OCI-LY7 (cell line): ENCODE measurements at regions of chr11 and their contacts with region 1.

Region 1: GRCh38 chr11:39385911-39386310 is 2073.5 kb downstream of the LRRC4C start:
- DNase-seq: no peak
- H3K4me3 ChIP-seq: no peak overlapping the region
- H3K27ac ChIP-seq: no peak overlapping the region
- H3K4me1 ChIP-seq: no peaks in the 10 kb centered on the region
- CTCF ChIP-seq: no peak

Region 2: GRCh38 chr11:38990161-38990560 is 395.8 kb before region 1 on chr11:
- CTCF ChIA-PET with region 1: no interaction called
- POLR2A ChIA-PET with region 1: no interaction called
- intact Hi-C with region 1: loop called (anchors 10 kb)
- DNase-seq: no peak
- H3K4me3 ChIP-seq: no peak overlapping the region
- H3K27ac ChIP-seq: no peak overlapping the region
- H3K4me1 ChIP-seq: no peaks in the 10 kb centered on the region
- CTCF ChIP-seq: no peak

Region 3: DNA sequence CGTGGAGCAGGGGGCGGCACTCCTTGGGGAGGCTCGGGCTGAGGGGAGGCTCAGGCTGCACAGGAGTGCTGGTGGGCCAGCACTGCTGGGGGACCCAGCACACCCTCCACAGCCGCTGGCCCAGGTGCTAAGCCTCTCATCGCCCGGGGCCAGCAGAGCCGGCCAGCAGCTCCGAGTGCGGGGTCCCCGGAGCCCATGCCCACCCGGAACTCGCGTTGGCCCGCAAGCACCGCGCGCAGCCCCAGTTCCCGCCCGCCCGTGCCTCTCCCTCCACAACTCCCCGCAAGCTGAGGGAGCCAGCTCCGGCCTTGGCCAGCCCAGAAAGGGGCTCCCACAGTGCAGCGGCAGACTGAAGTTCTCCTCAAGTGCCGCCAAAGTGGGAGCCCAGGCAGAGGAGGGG is 193.2 kb before region 1 on chr11:
- CTCF ChIA-PET with region 1: no interaction called
- POLR2A ChIA-PET with region 1: no interaction called
- intact Hi-C with region 1: no loop called
- DNase-seq: no peak
- H3K4me3 ChIP-seq: no peak overlapping the region
- H3K27ac ChIP-seq: no peak overlapping the region
- H3K4me1 ChIP-seq: no peaks in the 10 kb centered on the region
- CTCF ChIP-seq: no peak

Region 4: GRCh38 chr11:39221550-39222138 is 164.3 kb before region 1 on chr11:
- CTCF ChIA-PET with region 1: no interaction called
- POLR2A ChIA-PET with region 1: no interaction called
- intact Hi-C with region 1: no loop called
- DNase-seq: no peak
- H3K4me3 ChIP-seq: no peak overlapping the region
- H3K27ac ChIP-seq: no peak overlapping the region
- H3K4me1 ChIP-seq: no peaks in the 10 kb centered on the region
- CTCF ChIP-seq: no peak

Region 5: DNA sequence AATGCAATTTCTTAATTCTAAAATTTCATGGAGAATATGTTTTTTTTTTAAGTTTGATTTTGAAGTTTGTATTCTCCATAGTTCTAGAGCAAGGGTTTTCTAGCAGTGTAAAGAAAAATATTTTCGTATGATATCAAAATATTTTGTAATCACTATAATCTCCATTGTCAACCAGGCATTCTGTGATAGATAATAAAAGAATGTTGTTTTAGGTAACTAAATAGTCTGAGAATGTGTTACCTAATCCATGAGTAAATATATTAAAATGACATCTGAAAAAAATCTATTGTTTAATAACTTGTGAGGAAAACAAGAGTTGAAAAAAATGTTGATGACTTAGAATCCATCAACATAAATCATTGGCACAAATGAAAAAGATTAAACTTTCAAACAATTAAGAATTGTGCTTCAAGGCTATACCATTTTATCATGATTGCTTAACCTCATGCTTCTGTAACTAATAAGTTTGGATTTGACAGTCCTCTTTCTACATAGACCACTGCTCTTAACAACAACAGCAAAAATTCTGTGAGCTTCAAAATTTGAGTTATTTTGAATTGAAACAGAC is 138.3 kb before region 1 on chr11:
- CTCF ChIA-PET with region 1: no interaction called
- POLR2A ChIA-PET with region 1: no interaction called
- intact Hi-C with region 1: no loop called
- DNase-seq: no peak
- H3K4me3 ChIP-seq: no peak overlapping the region
- H3K27ac ChIP-seq: no peak overlapping the region
- H3K4me1 ChIP-seq: no peaks in the 10 kb centered on the region
- CTCF ChIP-seq: no peak

Region 6: DNA sequence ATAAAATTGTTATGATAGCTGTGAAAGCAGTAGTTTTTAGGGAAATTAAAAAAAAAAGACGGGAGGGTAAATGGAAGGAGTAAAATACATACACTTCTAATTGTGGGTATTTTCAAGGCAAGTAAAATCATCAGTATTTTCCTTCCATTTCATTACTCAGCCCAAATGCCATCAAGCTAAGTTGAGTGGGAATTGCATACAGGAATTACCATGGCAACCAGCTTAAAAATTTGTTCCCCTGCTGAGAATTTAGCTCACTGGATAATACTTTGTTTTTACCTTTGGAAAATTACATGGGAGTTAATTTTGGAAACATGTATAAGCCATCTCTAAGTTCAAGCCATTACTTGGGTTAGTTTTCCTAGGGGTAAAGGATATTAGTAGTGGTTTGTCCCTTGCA is 200.1 kb after region 1 on chr11:
- CTCF ChIA-PET with region 1: no interaction called
- POLR2A ChIA-PET with region 1: no interaction called
- intact Hi-C with region 1: no loop called
- DNase-seq: no peak
- H3K4me3 ChIP-seq: no peak overlapping the region
- H3K27ac ChIP-seq: no peak overlapping the region
- H3K4me1 ChIP-seq: no peaks in the 10 kb centered on the region
- CTCF ChIP-seq: no peak